Tibial artery (tissue), 4 donors: ENCODE measurements at regions of chr17 and their contacts with region 1.

Region 1: GRCh38 chr17:47698749-47699535 is 5.0 kb downstream of the TBKBP1 start:
- DNase-seq: peak in 1 of 2 donors; percentile 72
- H3K4me3 ChIP-seq: no peak overlapping the region
- H3K27ac ChIP-seq: no peak overlapping the region
- H3K4me1 ChIP-seq: peaks cover 0 to 21% (median 7%) of the 10 kb centered on the region in 4 donors
- H3K27me3 ChIP-seq: no peaks in the 10 kb centered on the region
- CTCF ChIP-seq: peak; percentile 62 to 96

Region 2: DNA sequence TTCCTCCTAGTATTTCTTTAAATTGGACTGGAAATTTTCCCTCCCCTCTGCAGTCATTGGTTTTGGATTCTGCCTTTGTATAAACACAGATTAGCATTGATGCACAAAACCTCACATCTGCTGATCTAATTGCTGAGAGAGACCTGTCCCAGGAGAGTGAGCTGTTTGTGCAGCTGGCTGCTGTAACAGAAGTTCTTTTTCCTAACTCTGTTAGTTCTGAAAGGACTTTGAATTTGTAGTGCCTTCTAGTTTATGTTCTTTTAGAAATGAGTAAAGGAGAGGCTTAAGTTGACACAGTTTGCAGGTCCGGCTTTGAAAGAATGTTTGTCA is 94.4 kb before region 1 on chr17:
- intact Hi-C with region 1: no loop called
- DNase-seq: peak in 1 of 2 donors; percentile 30
- H3K4me3 ChIP-seq: no peak overlapping the region
- H3K27ac ChIP-seq: peak overlapping the region; percentile 53 to 65
- H3K4me1 ChIP-seq: peaks cover 0 to 32% (median 12%) of the 10 kb centered on the region in 4 donors
- H3K27me3 ChIP-seq: no peaks in the 10 kb centered on the region
- CTCF ChIP-seq: no peak

Region 3: GRCh38 chr17:48107168-48108132 is 408.5 kb after region 1 on chr17 and contains the start of gene SNX11:
- intact Hi-C with region 1: loop called (anchors 10 kb)
- DNase-seq: peak; percentile 91 to 94
- H3K4me3 ChIP-seq: peak within 1 kb of the TSS; percentile 73 to 79
- H3K27ac ChIP-seq: peak within 1 kb of the TSS; percentile 89 to 92
- H3K4me1 ChIP-seq: peaks cover 0 to 31% (median 14%) of the 10 kb centered on the region in 4 donors
- H3K27me3 ChIP-seq: no peaks in the 10 kb centered on the region
- CTCF ChIP-seq: peak in 1 of 2 experiments; percentile 7